ENCODE measurements at regions of chr1 and their contacts with region 1.

Region 1: GRCh38 chr1:152047730-152048402 is 11.1 kb upstream of the S100A11 start:
- DNase-seq: peak; percentile 94 to 96
- H3K4me3 ChIP-seq: peak overlapping the region; percentile 52; the same call in 1 of the 2 replicates
- H3K27ac ChIP-seq: peak overlapping the region; percentile 99
- H3K4me1 ChIP-seq: peaks cover 72% of the 10 kb centered on the region
- H3K27me3 ChIP-seq: no peaks in the 10 kb centered on the region
- CTCF ChIP-seq: peak; percentile 51; the same call in 1 of the 2 replicates

Region 2: DNA sequence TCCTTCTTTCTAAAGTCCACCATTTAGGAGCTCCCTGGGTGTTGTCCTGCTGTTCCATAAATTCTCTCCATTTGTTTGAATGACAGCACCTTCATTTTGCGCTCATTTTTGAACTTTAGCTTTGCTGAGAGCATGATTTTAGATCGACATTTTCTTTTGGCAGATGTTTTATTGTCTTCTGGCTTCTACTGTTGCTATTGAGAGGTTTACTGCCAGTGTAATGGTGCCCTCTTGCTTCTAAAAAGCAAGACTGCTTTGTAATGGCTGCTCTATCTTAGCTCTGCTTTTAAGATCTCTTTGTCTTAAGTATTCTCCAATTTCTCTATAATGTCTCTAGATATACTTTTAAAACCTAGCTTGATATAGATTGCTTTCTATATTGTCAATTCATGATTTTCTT is 166.4 kb before region 1 on chr1:
- CTCF ChIA-PET with region 1: no interaction called
- POLR2A ChIA-PET with region 1: interaction called, 11 read pairs
- intact Hi-C with region 1: no loop called
- DNase-seq: no peak
- H3K4me3 ChIP-seq: no peak overlapping the region
- H3K27ac ChIP-seq: no peak overlapping the region
- H3K4me1 ChIP-seq: no peaks in the 10 kb centered on the region; the same call in 1 of the 2 replicates
- H3K27me3 ChIP-seq: no peaks in the 10 kb centered on the region
- CTCF ChIP-seq: no peak

Region 3: GRCh38 chr1:151898513-151898991 is 149.3 kb before region 1 on chr1:
- CTCF ChIA-PET with region 1: no interaction called
- POLR2A ChIA-PET with region 1: no interaction called
- intact Hi-C with region 1: no loop called
- DNase-seq: peak; percentile 41 to 70
- H3K4me3 ChIP-seq: peak overlapping the region; percentile 33; the same call in 1 of the 2 replicates
- H3K27ac ChIP-seq: peak overlapping the region; percentile 73
- H3K4me1 ChIP-seq: peaks cover 45% of the 10 kb centered on the region
- H3K27me3 ChIP-seq: no peaks in the 10 kb centered on the region
- CTCF ChIP-seq: no peak

Region 4: DNA sequence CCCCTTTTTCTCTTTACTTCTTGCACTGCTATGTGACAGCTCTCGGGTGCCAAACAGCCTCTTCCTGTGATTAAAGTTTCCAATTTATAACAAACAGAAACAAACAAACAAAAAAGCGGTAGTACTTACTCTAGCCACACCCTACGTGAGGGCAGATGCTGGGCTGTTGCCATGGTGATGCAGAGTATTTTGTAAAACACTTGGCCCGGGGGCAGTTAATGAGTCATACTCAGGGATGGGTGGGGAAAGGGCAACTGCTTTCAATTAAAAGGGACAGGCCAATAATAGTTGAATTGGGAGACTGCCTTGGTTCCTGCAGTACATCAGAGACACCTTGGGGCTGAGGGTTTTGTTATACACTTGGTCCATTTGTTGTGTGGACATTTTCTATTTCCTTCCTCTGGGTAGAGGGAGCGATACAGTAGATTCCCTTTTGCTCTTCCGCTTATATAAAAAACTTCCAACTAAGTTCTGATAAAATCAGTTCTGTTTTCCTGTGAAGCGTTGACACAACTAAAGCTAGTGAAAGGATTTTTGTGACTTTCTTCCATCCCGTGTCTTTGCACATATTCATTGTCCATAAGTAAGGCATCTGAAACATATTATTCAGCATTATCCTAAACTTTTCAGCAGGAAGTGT is 102.0 kb before region 1 on chr1:
- CTCF ChIA-PET with region 1: no interaction called
- POLR2A ChIA-PET with region 1: no interaction called
- intact Hi-C with region 1: loop called (anchors 1 kb)
- DNase-seq: peak; percentile 96 to 97
- H3K4me3 ChIP-seq: peak overlapping the region; percentile 35; the same call in 1 of the 2 replicates
- H3K27ac ChIP-seq: peak overlapping the region; percentile 91
- H3K4me1 ChIP-seq: peaks cover 72% of the 10 kb centered on the region
- H3K27me3 ChIP-seq: no peaks in the 10 kb centered on the region
- CTCF ChIP-seq: no peak

Region 5: DNA sequence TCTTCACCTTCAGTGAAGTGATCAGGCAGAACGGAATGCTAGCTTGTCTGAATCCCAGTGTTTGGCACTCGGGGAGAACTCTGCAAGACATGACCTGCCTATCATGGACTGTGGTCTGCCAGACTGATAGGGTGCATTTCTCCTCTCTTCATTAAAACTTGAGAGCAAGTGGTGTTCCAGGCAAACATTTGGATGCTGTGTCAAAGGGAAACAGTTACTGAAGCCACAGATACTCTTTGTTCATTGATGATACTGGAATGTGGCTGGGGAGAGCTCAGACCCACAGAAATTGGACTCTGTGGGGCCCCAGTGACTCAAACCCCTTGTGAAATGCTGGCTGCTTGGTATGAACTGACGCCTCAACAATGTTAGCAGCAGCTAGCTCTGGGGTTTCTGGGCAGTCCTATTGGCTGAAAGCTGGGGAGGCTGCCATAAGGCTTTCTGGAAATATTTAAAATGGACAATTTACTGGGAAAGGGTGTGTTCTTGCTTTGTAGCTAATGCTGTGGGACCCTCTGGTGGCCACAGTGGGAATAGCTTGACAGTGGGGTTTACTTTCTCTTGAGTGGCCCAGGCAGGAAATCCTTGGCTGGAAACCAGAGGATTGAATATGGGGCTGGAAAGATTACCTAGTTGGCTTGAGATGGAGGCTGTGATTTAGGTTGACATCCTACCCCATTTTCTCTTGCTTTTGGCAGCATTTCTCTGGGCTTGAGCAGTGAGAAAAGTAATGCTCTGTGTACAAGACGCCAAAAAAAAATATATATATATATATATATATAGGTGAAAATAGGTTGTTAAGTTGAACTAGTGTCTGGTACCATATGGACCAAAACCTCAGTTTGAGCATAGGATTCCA is 46.2 kb before region 1 on chr1:
- CTCF ChIA-PET with region 1: no interaction called
- POLR2A ChIA-PET with region 1: interaction called, 15 read pairs
- intact Hi-C with region 1: no loop called
- DNase-seq: peak; percentile 87 to 93
- H3K4me3 ChIP-seq: no peak overlapping the region
- H3K27ac ChIP-seq: peak overlapping the region; percentile 90
- H3K4me1 ChIP-seq: peaks cover 57% of the 10 kb centered on the region
- H3K27me3 ChIP-seq: no peaks in the 10 kb centered on the region
- CTCF ChIP-seq: peak; percentile 94

Region 6: GRCh38 chr1:152034646-152035405 is 13.0 kb before region 1 on chr1:
- CTCF ChIA-PET with region 1: interaction called, 10 read pairs
- POLR2A ChIA-PET with region 1: interaction called, 63 read pairs
- intact Hi-C with region 1: loop called (anchors 1 kb)
- DNase-seq: peak; percentile 78 to 90
- H3K4me3 ChIP-seq: peak overlapping the region; percentile 89
- H3K27ac ChIP-seq: peak overlapping the region; percentile 97
- H3K4me1 ChIP-seq: peaks cover 66% of the 10 kb centered on the region
- H3K27me3 ChIP-seq: no peaks in the 10 kb centered on the region
- CTCF ChIP-seq: peak; percentile 94

Region 7: DNA sequence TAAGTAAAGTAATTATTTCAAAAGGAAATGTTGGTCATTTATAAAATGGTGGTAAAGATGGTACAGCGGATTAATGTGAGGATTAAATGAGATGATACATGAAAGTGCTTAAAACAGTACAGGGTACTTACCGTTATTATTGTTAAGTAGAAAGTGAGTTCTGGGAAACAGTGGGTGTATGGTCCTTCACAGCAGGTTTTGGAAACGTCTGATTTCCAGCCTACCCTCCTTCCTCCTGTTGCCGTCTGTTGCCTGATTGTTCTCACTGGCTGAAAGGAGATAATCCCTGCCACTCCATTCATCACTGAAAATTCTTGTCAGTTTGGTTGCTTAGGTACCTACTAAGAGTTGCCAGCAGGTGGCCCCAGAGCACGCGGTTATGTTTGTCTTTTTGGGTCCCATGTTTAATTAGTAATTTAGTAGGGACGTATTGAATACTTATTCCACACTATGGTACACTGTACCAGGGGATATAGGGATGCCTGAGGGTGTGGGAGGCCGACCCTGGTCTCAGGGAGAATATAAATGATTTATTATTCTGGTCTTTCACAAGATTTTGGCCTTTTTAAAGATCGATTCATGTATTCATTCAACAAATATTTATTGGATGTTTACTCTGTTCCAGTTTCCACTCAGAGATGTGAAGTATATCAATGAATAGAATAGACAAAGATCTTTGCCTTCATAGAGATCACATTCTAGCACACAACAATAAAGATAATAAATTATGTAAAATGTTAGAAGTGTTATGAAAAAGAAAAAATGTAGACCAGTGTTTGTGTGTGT is 142.0 kb after region 1 on chr1:
- CTCF ChIA-PET with region 1: no interaction called
- POLR2A ChIA-PET with region 1: no interaction called
- intact Hi-C with region 1: loop called (anchors 1 kb)
- DNase-seq: peak in 1 of 2 experiments; percentile 53
- H3K4me3 ChIP-seq: no peak overlapping the region
- H3K27ac ChIP-seq: peak overlapping the region; percentile 40; the same call in 1 of the 2 replicates
- H3K4me1 ChIP-seq: peaks cover 27% of the 10 kb centered on the region
- H3K27me3 ChIP-seq: peaks cover 22% of the 10 kb centered on the region; the same call in 1 of the 2 replicates
- CTCF ChIP-seq: peak; percentile 86

Region 8: DNA sequence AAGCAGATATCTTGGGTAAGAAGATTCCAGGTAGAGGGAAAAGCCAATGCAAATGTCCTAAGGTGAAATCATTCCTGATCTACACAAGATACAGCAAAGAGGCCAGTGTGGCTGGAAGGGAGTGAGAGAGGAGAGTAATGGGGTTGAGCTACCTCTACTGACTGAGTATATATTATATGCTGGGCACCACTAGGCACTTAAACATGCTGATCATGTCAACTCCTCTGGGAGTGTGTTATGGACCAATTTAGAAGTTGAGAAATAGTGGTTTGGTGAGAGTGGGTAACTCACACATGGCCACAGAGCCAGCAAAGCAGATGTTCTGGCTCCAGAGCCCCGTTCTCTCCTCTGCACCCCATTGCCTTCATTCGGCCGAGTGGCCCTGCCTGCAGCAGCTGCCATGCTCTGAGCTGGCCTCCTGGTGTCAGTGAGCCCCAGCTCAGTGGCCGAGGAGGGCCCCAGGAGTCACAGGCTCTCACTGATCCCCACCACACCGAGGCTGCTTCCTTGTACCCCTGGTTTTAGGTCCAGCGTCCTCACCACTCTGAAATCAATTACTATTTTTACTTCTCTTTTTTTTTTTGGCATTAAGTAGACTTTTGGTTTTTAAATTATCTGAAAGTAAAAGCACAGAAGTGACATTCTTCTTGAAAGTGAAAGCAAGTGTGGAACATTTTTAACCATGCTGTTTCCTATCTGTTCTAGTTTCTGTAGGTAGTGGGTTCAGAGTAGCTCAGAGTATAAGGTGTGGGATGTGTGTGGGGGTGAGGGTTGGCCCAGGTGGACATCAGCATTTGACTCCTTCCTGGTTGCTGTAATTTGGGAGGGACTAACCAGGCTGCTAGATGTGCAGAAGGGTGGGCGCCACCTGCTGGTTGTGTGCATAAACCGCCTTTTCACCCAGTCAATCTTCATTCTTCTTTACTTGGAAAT is 412.0 kb after region 1 on chr1:
- CTCF ChIA-PET with region 1: interaction called, 8 read pairs
- POLR2A ChIA-PET with region 1: no interaction called
- intact Hi-C with region 1: loop called (anchors 5 kb)
- DNase-seq: peak; percentile 39
- H3K4me3 ChIP-seq: no peak overlapping the region
- H3K27ac ChIP-seq: no peak overlapping the region
- H3K4me1 ChIP-seq: no peaks in the 10 kb centered on the region
- H3K27me3 ChIP-seq: no peaks in the 10 kb centered on the region
- CTCF ChIP-seq: peak; percentile 72